Thyroid gland (tissue), 4 donors: ENCODE measurements at regions of chr3 and their contacts with region 1.

Region 1: DNA sequence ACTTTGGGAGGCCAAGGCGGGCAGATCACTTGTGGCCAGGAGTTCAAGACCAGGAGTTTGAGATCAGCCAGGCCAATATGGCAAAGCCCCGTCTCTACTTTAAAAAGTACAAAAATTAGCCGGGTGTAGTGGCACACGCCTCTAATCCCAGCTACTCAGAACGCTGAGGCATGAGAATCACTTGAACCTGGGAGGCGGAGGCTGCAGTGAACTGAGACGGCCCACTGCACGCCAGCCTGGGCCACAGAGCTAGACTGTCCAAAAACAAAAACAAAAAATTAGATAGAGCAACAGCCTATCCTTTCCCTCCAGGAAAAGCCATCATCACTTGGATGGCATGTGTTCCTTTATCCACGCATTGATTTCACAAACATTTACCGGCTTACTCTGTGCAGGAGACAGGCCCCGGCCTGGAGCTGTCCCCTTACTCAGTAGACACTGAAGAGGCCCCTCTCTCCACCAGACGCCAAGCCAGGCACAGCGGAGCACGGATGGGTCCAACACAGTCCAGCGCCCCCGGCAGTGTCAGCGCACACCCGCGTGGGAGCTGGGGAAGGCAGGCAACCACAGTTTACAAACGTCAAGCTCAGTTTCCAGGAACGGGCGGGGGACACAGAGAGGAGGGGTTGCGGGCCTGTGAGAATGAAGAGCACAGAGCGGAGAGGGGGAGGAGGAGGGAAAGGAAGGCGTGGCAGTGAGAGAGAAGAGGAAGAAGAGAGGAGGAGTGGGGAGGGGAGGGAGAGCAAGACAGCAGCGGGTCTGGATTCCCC is 3.1 kb downstream of the GP5 start:
- DNase-seq: peak; percentile 77 to 82
- H3K4me3 ChIP-seq: no peak overlapping the region
- H3K27ac ChIP-seq: peak overlapping the region; percentile 60 to 90 (median 83)
- H3K4me1 ChIP-seq: peaks cover 14 to 34% of the 10 kb centered on the region in 2 donors
- H3K27me3 ChIP-seq: no peaks in the 10 kb centered on the region
- CTCF ChIP-seq: no peak
- POLR2A ChIP-seq: peak in 1 of 2 donors; percentile 3

Region 2: DNA sequence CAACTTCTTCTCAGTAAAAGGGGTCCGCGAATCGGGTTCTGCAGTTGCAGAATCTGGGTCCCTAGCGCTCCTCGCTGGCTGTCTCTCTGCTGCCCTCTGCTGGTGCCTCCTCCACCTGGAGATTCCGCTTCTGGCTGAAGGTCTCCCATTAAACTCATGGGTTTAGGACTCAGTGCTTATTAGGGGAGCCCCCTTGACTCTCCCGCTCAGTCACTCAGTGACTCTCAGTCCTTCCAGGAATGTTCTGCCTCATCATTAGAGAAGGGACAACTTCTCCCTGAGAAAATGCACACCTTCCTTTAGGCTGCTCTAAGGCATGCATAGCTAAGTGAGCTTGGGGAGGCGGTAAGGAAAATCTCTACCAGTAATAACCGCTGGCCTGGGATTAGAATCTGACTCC is 52.0 kb before region 1 on chr3:
- intact Hi-C with region 1: loop called (anchors 5 kb)
- DNase-seq: peak; percentile 75 to 83
- H3K4me3 ChIP-seq: no peak overlapping the region
- H3K27ac ChIP-seq: no peak overlapping the region
- H3K4me1 ChIP-seq: peaks cover 0 to 4% of the 10 kb centered on the region in 2 donors
- H3K27me3 ChIP-seq: no peaks in the 10 kb centered on the region
- CTCF ChIP-seq: peak; percentile 66 to 95 (median 84)
- POLR2A ChIP-seq: no peak